ENCODE measurements at regions of chr7 and their contacts with region 1.

Region 1: GRCh38 chr7:51141451-51142003 is 175.1 kb downstream of the COBL start:
- DNase-seq: peak; percentile 81
- H3K4me3 ChIP-seq: no peak overlapping the region
- H3K27ac ChIP-seq: no peak overlapping the region
- H3K4me1 ChIP-seq: peaks cover 27% of the 10 kb centered on the region
- H3K27me3 ChIP-seq: peaks cover 0 to 2% of the 10 kb centered on the region in 2 experiments
- CTCF ChIP-seq: peak; percentile 48 to 60
- POLR2A ChIP-seq: no peak

Region 2: GRCh38 chr7:50142425-50143017 is 999.0 kb before region 1 on chr7:
- CTCF ChIA-PET with region 1: interaction called, 18 read pairs
- POLR2A ChIA-PET with region 1: no interaction called
- dilution Hi-C with region 1: no loop called
- intact Hi-C with region 1: no loop called
- DNase-seq: peak; percentile 44
- H3K4me3 ChIP-seq: no peak overlapping the region
- H3K27ac ChIP-seq: no peak overlapping the region
- H3K4me1 ChIP-seq: no peaks in the 10 kb centered on the region
- H3K27me3 ChIP-seq: no peaks in the 10 kb centered on the region
- CTCF ChIP-seq: peak; percentile 26 to 49
- POLR2A ChIP-seq: no peak

Region 3: DNA sequence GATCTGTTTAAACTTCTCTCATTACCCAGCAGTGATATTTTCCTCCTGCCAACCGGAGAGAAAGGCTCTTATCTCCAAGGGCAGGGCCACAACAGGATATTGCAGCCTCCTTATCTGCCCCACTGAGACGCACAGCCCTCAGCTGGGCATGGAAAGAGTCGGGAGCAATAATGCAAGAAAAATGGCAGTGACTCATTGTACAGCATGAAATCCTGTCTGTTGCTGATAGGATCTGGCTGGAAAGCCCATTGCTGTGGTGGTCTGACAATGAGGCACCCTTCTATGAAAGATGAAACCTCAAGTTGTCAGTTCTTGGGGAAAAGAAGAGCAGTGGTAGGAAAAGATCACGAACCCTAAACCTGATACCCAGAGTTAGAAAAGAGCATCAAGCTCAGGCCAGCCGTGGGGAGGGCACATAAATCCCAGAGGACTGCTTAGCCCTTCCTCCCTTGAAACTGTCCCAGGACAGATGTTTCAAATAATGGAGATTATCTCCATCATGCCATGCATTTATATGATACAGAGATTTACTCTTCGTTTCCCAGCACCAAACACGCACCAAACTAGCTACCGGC is 644.4 kb before region 1 on chr7:
- CTCF ChIA-PET with region 1: interaction called, 29 read pairs
- POLR2A ChIA-PET with region 1: no interaction called
- dilution Hi-C with region 1: no loop called
- intact Hi-C with region 1: no loop called
- DNase-seq: peak; percentile 99
- H3K4me3 ChIP-seq: peak overlapping the region in 1 of 3 experiments; percentile 4
- H3K27ac ChIP-seq: peak overlapping the region; percentile 99
- H3K4me1 ChIP-seq: peaks cover 40% of the 10 kb centered on the region
- H3K27me3 ChIP-seq: no peaks in the 10 kb centered on the region
- CTCF ChIP-seq: no peak
- POLR2A ChIP-seq: peak; percentile 67

Region 4: DNA sequence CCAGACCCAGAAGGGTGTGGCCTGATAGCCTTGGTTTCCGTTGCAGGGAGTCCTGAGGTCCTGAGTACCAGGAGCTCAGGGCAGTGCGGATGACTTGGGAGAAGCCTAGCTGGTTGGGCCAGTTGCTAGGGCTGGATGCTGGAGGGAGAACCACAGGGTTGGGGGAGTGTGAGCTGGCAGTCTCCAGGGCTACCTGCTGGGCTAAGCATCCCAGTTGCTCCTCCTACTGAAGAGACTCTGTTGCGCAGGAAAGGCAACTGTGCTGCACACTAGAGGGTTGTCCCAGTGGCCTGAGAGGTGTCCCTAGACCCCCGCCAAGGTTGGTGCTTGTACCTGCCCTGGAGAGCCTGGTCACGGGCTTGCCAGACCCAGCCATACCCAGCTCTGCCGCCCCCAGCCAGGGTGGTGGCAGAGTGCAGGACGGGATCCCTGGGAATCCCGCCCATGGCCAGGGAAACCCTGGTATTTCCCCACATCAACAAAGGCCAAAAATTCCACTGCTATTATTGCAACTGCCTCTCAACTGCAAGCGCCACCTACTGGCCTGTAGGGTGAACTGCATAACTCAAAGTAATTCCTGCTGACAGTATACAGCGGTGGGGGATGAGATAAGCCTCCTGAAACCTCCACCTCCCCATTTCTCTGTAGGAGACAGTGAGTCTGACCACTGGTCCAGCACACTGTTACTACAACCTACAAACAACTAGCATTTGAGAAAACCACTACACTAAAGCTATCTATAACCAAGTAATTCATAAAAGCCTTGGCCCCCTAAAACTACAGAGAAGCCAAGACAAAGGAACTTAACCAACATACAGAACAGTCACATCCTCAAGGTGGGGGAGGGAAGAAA is 508.7 kb before region 1 on chr7:
- CTCF ChIA-PET with region 1: interaction called, 14 read pairs
- POLR2A ChIA-PET with region 1: no interaction called
- dilution Hi-C with region 1: no loop called
- intact Hi-C with region 1: no loop called
- DNase-seq: peak; percentile 71
- H3K4me3 ChIP-seq: no peak overlapping the region
- H3K27ac ChIP-seq: no peak overlapping the region
- H3K4me1 ChIP-seq: peaks cover 4% of the 10 kb centered on the region
- H3K27me3 ChIP-seq: no peaks in the 10 kb centered on the region
- CTCF ChIP-seq: peak; percentile 81 to 82
- POLR2A ChIP-seq: no peak

Region 5: GRCh38 chr7:50721165-50721564 is 420.4 kb before region 1 on chr7:
- CTCF ChIA-PET with region 1: interaction called, 17 read pairs
- POLR2A ChIA-PET with region 1: no interaction called
- dilution Hi-C with region 1: no loop called
- intact Hi-C with region 1: no loop called
- DNase-seq: peak; percentile 64
- H3K4me3 ChIP-seq: no peak overlapping the region
- H3K27ac ChIP-seq: no peak overlapping the region
- H3K4me1 ChIP-seq: peaks cover 51% of the 10 kb centered on the region
- H3K27me3 ChIP-seq: no peaks in the 10 kb centered on the region
- CTCF ChIP-seq: no peak
- POLR2A ChIP-seq: no peak

Region 6: GRCh38 chr7:51000956-51001355 is 140.6 kb before region 1 on chr7:
- CTCF ChIA-PET with region 1: no interaction called
- POLR2A ChIA-PET with region 1: interaction called, 3 read pairs
- dilution Hi-C with region 1: no loop called
- intact Hi-C with region 1: loop called (anchors 5 kb)
- DNase-seq: no peak
- H3K4me3 ChIP-seq: no peak overlapping the region
- H3K27ac ChIP-seq: no peak overlapping the region
- H3K4me1 ChIP-seq: no peaks in the 10 kb centered on the region
- H3K27me3 ChIP-seq: peaks cover 0 to 8% of the 10 kb centered on the region in 2 experiments
- CTCF ChIP-seq: no peak
- POLR2A ChIP-seq: no peak

Region 7: GRCh38 chr7:51162724-51163329 is 21.3 kb after region 1 on chr7:
- CTCF ChIA-PET with region 1: interaction called, 58 read pairs
- POLR2A ChIA-PET with region 1: no interaction called
- dilution Hi-C with region 1: no loop called
- intact Hi-C with region 1: no loop called
- DNase-seq: peak; percentile 85
- H3K4me3 ChIP-seq: no peak overlapping the region
- H3K27ac ChIP-seq: no peak overlapping the region
- H3K4me1 ChIP-seq: no peaks in the 10 kb centered on the region
- H3K27me3 ChIP-seq: peaks cover 0 to 16% of the 10 kb centered on the region in 2 experiments
- CTCF ChIP-seq: peak; percentile 83
- POLR2A ChIP-seq: no peak

Region 8: GRCh38 chr7:51198654-51199053 is 57.1 kb after region 1 on chr7:
- CTCF ChIA-PET with region 1: no interaction called
- POLR2A ChIA-PET with region 1: no interaction called
- dilution Hi-C with region 1: no loop called
- intact Hi-C with region 1: no loop called
- DNase-seq: no peak
- H3K4me3 ChIP-seq: no peak overlapping the region
- H3K27ac ChIP-seq: no peak overlapping the region
- H3K4me1 ChIP-seq: no peaks in the 10 kb centered on the region
- H3K27me3 ChIP-seq: no peaks in the 10 kb centered on the region
- CTCF ChIP-seq: no peak
- POLR2A ChIP-seq: no peak

Region 9: DNA sequence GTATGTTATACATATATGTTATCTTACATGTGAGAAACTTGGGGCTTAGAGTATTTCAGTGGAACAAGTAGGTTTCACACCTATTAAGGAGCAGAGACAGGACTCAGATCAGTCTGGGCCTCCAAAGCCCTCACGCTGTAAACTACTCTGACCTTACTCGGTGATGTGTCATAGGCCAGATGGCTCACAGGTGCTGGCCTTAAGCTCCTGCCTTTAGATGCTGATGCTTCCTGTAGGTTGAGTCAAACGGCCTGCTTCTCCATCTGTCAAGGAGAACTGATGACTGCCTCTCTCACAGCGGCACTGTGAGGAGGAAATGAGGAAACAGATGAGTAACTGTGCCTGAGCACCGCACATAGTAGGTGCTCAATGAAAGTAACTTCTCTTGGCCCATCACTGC is 487.7 kb after region 1 on chr7:
- CTCF ChIA-PET with region 1: no interaction called
- POLR2A ChIA-PET with region 1: no interaction called
- dilution Hi-C with region 1: no loop called
- intact Hi-C with region 1: no loop called
- DNase-seq: no peak
- H3K4me3 ChIP-seq: no peak overlapping the region
- H3K27ac ChIP-seq: no peak overlapping the region
- H3K4me1 ChIP-seq: no peaks in the 10 kb centered on the region
- H3K27me3 ChIP-seq: no peaks in the 10 kb centered on the region
- CTCF ChIP-seq: no peak
- POLR2A ChIP-seq: no peak

Region 10: GRCh38 chr7:52289247-52289646 is 1147.7 kb after region 1 on chr7:
- CTCF ChIA-PET with region 1: no interaction called
- POLR2A ChIA-PET with region 1: no interaction called
- dilution Hi-C with region 1: no loop called
- intact Hi-C with region 1: no loop called
- DNase-seq: no peak
- H3K4me3 ChIP-seq: no peak overlapping the region
- H3K27ac ChIP-seq: no peak overlapping the region
- H3K4me1 ChIP-seq: no peaks in the 10 kb centered on the region
- H3K27me3 ChIP-seq: no peaks in the 10 kb centered on the region
- CTCF ChIP-seq: no peak
- POLR2A ChIP-seq: no peak